ENCODE measurements at regions of chr11 and their contacts with region 1.

Region 1: GRCh38 chr11:10455637-10456487 is 798 bp downstream of the AMPD3 start:
- DNase-seq: peak; percentile 50 to 87 (median 75)
- ATAC-seq: peak; percentile 71
- H3K4me3 ChIP-seq: peak overlapping the region; percentile 66
- H3K4me3 Mint-ChIP-seq: peak overlapping the region; percentile 93
- H3K27ac ChIP-seq: peak overlapping the region; percentile 63 to 89
- H3K27ac Mint-ChIP-seq: peak overlapping the region; percentile 95
- H3K4me1 ChIP-seq: peaks cover 77% of the 10 kb centered on the region
- H3K4me1 Mint-ChIP-seq: peaks cover 78% of the 10 kb centered on the region
- H3K27me3 ChIP-seq: no peaks in the 10 kb centered on the region
- H3K27me3 Mint-ChIP-seq: no peaks in the 10 kb centered on the region
- CTCF ChIP-seq: no peak

Region 2: GRCh38 chr11:9757809-9758636 is 697.8 kb before region 1 on chr11:
- CTCF ChIA-PET with region 1: no interaction called
- POLR2A ChIA-PET with region 1: no interaction called
- intact Hi-C with region 1: loop called in 1 of 2 experiments (anchors 10 kb)
- DNase-seq: peak; percentile 83 to 97 (median 89)
- ATAC-seq: peak; percentile 81
- H3K4me3 ChIP-seq: peak overlapping the region; percentile 75
- H3K4me3 Mint-ChIP-seq: peak overlapping the region; percentile 88
- H3K27ac ChIP-seq: no peak overlapping the region
- H3K27ac Mint-ChIP-seq: peak overlapping the region; percentile 79
- H3K4me1 ChIP-seq: peaks cover 21% of the 10 kb centered on the region
- H3K4me1 Mint-ChIP-seq: peaks cover 17% of the 10 kb centered on the region
- H3K27me3 ChIP-seq: no peaks in the 10 kb centered on the region
- H3K27me3 Mint-ChIP-seq: no peaks in the 10 kb centered on the region
- CTCF ChIP-seq: peak; percentile 62

Region 3: DNA sequence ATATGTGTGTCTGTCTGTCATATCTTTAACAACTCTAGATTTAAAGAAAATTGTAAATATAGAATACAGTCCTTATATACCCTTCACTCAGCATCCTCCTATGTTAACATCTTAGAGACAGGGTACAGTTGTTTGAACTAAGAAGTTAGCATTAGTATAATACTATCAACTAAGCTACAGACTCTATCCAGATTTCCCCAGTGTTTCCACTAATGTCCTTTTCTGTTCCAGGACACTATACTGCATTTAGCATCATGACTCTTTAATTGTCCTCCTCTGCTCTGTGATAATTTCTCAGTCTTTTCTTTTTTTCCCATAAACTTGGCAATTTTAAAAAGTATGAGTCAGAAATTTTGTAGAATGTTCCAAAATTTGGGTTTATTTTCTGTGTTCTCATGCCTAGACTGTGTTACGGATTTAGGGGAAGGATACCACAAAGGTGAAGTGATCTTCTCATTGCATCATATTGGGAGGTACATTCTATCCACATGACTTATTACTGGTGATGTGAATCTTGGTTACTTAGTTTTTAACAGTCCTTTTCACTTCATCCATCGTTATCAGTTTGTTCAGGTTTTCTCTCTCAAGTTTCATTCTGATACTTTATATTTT is 330.2 kb before region 1 on chr11:
- CTCF ChIA-PET with region 1: no interaction called
- POLR2A ChIA-PET with region 1: no interaction called
- intact Hi-C with region 1: no loop called
- DNase-seq: no peak
- ATAC-seq: no peak
- H3K4me3 ChIP-seq: no peak overlapping the region
- H3K4me3 Mint-ChIP-seq: no peak overlapping the region
- H3K27ac ChIP-seq: no peak overlapping the region
- H3K27ac Mint-ChIP-seq: no peak overlapping the region
- H3K4me1 ChIP-seq: no peaks in the 10 kb centered on the region
- H3K4me1 Mint-ChIP-seq: no peaks in the 10 kb centered on the region
- H3K27me3 ChIP-seq: no peaks in the 10 kb centered on the region
- H3K27me3 Mint-ChIP-seq: no peaks in the 10 kb centered on the region
- CTCF ChIP-seq: no peak

Region 4: GRCh38 chr11:10413268-10413667 is 42.6 kb before region 1 on chr11:
- CTCF ChIA-PET with region 1: interaction called, 7 read pairs
- POLR2A ChIA-PET with region 1: interaction called, 9 read pairs
- intact Hi-C with region 1: loop called in 1 of 2 experiments (anchors 2 kb)
- DNase-seq: peak; percentile 20 to 78 (median 44)
- ATAC-seq: peak; percentile 92
- H3K4me3 ChIP-seq: no peak overlapping the region
- H3K4me3 Mint-ChIP-seq: no peak overlapping the region
- H3K27ac ChIP-seq: no peak overlapping the region
- H3K27ac Mint-ChIP-seq: no peak overlapping the region
- H3K4me1 ChIP-seq: peaks cover 32% of the 10 kb centered on the region
- H3K4me1 Mint-ChIP-seq: peaks cover 50% of the 10 kb centered on the region
- H3K27me3 ChIP-seq: no peaks in the 10 kb centered on the region
- H3K27me3 Mint-ChIP-seq: no peaks in the 10 kb centered on the region
- CTCF ChIP-seq: peak; percentile 61

Region 5: GRCh38 chr11:10742471-10743208 is 286.8 kb after region 1 on chr11:
- CTCF ChIA-PET with region 1: no interaction called
- POLR2A ChIA-PET with region 1: interaction called, 3 read pairs
- intact Hi-C with region 1: loop called in 1 of 2 experiments (anchors 5 kb)
- DNase-seq: peak in 6 of 14 experiments; percentile 16 to 77 (median 54)
- ATAC-seq: peak; percentile 89
- H3K4me3 ChIP-seq: no peak overlapping the region
- H3K4me3 Mint-ChIP-seq: peak overlapping the region; percentile 85
- H3K27ac ChIP-seq: no peak overlapping the region
- H3K27ac Mint-ChIP-seq: peak overlapping the region; percentile 91
- H3K4me1 ChIP-seq: peaks cover 27% of the 10 kb centered on the region
- H3K4me1 Mint-ChIP-seq: peaks cover 25% of the 10 kb centered on the region
- H3K27me3 ChIP-seq: no peaks in the 10 kb centered on the region
- H3K27me3 Mint-ChIP-seq: no peaks in the 10 kb centered on the region
- CTCF ChIP-seq: no peak